ENCODE measurements at regions of chrX and their contacts with region 1.

Region 1: DNA sequence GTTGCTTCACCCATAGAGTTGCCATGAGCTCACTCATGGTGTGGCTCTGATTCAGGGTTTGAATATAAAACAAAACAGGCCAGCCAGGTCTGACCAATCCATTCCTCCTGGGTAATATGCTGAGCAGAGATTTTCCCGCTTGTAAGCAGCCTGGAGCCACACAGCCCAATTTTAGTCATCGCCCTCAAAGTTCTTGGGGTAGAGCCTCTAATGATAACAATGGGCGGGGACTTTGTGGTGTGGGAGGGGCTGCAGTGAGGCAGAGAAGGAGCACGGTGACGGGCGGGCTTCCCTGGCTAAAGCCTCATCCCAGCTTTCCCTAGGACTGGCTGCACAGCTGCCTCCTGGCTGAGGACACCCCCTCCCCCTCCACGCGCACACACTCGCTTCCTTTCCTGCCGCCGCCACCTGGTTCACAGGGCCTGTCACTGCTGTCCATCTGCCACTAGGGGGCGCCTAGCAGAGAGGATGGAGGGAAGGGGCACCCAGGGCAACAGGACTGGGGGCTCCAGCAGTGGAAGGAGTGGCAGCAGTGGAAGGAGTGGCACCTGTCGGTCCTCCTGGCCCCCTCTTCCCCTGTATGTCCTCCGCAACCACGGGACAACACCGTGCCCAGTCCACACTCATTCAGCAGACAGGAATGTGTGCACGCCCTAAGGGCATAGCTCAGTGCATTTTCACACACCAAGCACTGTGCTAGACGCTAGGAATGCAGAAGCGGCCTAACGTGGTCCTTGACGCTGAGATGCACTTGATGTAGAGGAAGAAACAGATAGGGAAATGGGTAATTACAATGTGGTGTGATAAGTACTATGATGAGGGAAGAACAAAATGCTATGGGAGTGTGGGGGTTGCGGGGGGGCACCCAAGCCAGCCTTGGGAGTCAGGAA is 26.8 kb downstream of the PRPS1 start:
- DNase-seq: peak; percentile 34
- ATAC-seq: peak; percentile 88
- H3K4me3 ChIP-seq: no peak overlapping the region
- H3K27ac ChIP-seq: peak overlapping the region; percentile 43; the same call in 1 of the 2 replicates
- H3K4me1 ChIP-seq: peaks cover 15% of the 10 kb centered on the region in 2 experiments
- H3K27me3 ChIP-seq: no peaks in the 10 kb centered on the region
- CTCF ChIP-seq: peak; percentile 39 to 81 (median 73); a peak in 5 of 6 replicates
- POLR2A ChIP-seq: no peak
- RAD21 ChIP-seq: peak; percentile 42; the same call in 1 of the 2 replicates

Region 2: DNA sequence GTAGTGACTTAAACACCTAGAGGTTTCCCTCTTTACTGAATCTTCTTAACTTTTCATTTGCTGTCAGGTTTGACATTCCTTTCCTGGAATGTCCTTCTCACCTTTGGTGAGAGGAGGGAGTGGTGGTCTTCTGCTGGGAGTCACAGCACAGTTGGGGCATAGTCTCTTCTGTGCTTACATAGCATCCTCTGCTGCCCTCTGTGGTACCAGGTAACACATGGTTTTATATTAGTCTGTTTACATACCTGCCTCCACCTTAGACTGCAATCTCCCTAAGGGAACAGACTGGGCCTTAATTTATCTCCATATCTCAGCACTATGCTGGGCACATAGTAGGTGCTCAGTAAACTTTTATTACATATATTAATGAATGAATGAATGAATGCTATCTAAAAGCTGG is 145.5 kb before region 1 on chrX:
- CTCF ChIA-PET with region 1: no interaction called
- POLR2A ChIA-PET with region 1: no interaction called
- RAD21 ChIA-PET with region 1: no interaction called
- intact Hi-C with region 1: no loop called
- DNase-seq: no peak
- ATAC-seq: 0 out of 2 replicates have a peak, but pooled peaks have one; percentile 40
- H3K4me3 ChIP-seq: no peak overlapping the region
- H3K27ac ChIP-seq: no peak overlapping the region
- H3K4me1 ChIP-seq: no peaks in the 10 kb centered on the region
- H3K27me3 ChIP-seq: no peaks in the 10 kb centered on the region
- CTCF ChIP-seq: no peak
- POLR2A ChIP-seq: no peak
- RAD21 ChIP-seq: peak; percentile 18; the same call in 1 of the 2 replicates

Region 3: GRCh38 chrX:107672955-107673378 is 17.9 kb after region 1 on chrX:
- CTCF ChIA-PET with region 1: interaction called, 13 read pairs
- POLR2A ChIA-PET with region 1: no interaction called
- RAD21 ChIA-PET with region 1: interaction called in 1 of 2 experiments, 3 read pairs
- intact Hi-C with region 1: no loop called
- DNase-seq: peak; percentile 63
- ATAC-seq: peak; percentile 75
- H3K4me3 ChIP-seq: no peak overlapping the region
- H3K27ac ChIP-seq: no peak overlapping the region
- H3K4me1 ChIP-seq: peaks cover 32 to 42% of the 10 kb centered on the region in 2 experiments
- H3K27me3 ChIP-seq: no peaks in the 10 kb centered on the region
- CTCF ChIP-seq: peak in 2 of 3 experiments; percentile 49 to 64; a peak in 4 of 6 replicates
- POLR2A ChIP-seq: no peak
- RAD21 ChIP-seq: no peak

Region 4: GRCh38 chrX:107894038-107894437 is 238.9 kb after region 1 on chrX:
- CTCF ChIA-PET with region 1: interaction called, 7 read pairs
- POLR2A ChIA-PET with region 1: no interaction called
- RAD21 ChIA-PET with region 1: no interaction called
- intact Hi-C with region 1: loop called (anchors 5 kb)
- DNase-seq: peak; percentile 51
- ATAC-seq: peak; percentile 83
- H3K4me3 ChIP-seq: no peak overlapping the region
- H3K27ac ChIP-seq: no peak overlapping the region
- H3K4me1 ChIP-seq: no peaks in the 10 kb centered on the region
- H3K27me3 ChIP-seq: no peaks in the 10 kb centered on the region
- CTCF ChIP-seq: peak; percentile 25 to 54 (median 50); a peak in 5 of 6 replicates
- POLR2A ChIP-seq: no peak
- RAD21 ChIP-seq: peak; percentile 74

Region 5: DNA sequence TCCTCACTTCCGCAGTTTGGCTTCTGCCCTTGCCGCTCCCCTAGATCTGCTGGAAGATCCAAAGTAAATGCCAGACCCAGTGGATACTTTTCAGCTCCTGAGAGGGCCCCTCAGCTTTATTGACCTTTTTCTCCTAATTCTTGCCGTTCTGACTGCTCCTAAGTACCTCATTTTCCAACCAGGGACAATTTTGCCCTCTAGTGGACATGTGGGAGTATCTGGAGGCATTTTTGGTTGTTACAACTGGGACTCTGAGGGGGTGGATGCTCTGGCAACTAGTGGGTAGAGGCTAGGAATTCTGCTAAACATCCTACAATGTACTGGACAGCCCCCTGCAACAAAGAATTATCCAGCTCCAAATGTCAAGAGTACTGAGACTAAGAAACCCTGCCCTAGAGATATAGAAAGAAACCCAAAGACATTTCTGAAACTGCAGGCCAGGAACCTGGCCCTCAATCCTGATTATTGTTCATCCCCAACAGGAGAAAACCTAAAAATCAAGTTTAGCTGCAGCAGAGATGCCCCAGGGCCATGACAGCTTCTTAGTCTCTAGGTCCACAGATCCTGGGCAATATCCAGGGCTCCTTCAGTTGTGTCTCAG is 323.7 kb after region 1 on chrX:
- CTCF ChIA-PET with region 1: no interaction called
- POLR2A ChIA-PET with region 1: no interaction called
- RAD21 ChIA-PET with region 1: no interaction called
- intact Hi-C with region 1: loop called (anchors 10 kb)
- DNase-seq: peak; percentile 12
- ATAC-seq: peak; percentile 85
- H3K4me3 ChIP-seq: no peak overlapping the region
- H3K27ac ChIP-seq: no peak overlapping the region
- H3K4me1 ChIP-seq: no peaks in the 10 kb centered on the region
- H3K27me3 ChIP-seq: no peaks in the 10 kb centered on the region
- CTCF ChIP-seq: peak; percentile 38 to 67 (median 53); a peak in 5 of 6 replicates
- POLR2A ChIP-seq: no peak
- RAD21 ChIP-seq: peak; percentile 64

Region 6: GRCh38 chrX:108070891-108071290 is 415.8 kb after region 1 on chrX:
- CTCF ChIA-PET with region 1: interaction called, 3 read pairs
- POLR2A ChIA-PET with region 1: no interaction called
- RAD21 ChIA-PET with region 1: no interaction called
- intact Hi-C with region 1: loop called (anchors 5 kb)
- DNase-seq: no peak
- ATAC-seq: peak; percentile 47; the same call in 1 of the 2 replicates
- H3K4me3 ChIP-seq: no peak overlapping the region
- H3K27ac ChIP-seq: no peak overlapping the region
- H3K4me1 ChIP-seq: peaks cover 0 to 6% of the 10 kb centered on the region in 2 experiments; a peak in 1 of 4 replicates
- H3K27me3 ChIP-seq: no peaks in the 10 kb centered on the region
- CTCF ChIP-seq: no peak
- POLR2A ChIP-seq: no peak
- RAD21 ChIP-seq: no peak